Panc1 (cell line): ENCODE measurements at regions of chr1 and their contacts with region 1.

Region 1: GRCh38 chr1:52469108-52469507 is 64.7 kb downstream of the PRPF38A start:
- DNase-seq: no peak
- ATAC-seq: no peak
- H3K4me3 ChIP-seq: no peak overlapping the region
- H3K27ac ChIP-seq: no peak overlapping the region
- H3K4me1 ChIP-seq: no peaks in the 10 kb centered on the region
- H3K27me3 ChIP-seq: no peaks in the 10 kb centered on the region
- CTCF ChIP-seq: no peak

Region 2: GRCh38 chr1:52613636-52614373 is 144.7 kb after region 1 on chr1:
- CTCF ChIA-PET with region 1: interaction called, 12 read pairs
- POLR2A ChIA-PET with region 1: no interaction called
- in situ Hi-C with region 1: no loop called
- intact Hi-C with region 1: no loop called
- DNase-seq: no peak
- ATAC-seq: no peak
- H3K4me3 ChIP-seq: no peak overlapping the region
- H3K27ac ChIP-seq: no peak overlapping the region
- H3K4me1 ChIP-seq: no peaks in the 10 kb centered on the region
- H3K27me3 ChIP-seq: no peaks in the 10 kb centered on the region
- CTCF ChIP-seq: no peak